ENCODE measurements at regions of chr1 and their contacts with region 1.

Region 1: DNA sequence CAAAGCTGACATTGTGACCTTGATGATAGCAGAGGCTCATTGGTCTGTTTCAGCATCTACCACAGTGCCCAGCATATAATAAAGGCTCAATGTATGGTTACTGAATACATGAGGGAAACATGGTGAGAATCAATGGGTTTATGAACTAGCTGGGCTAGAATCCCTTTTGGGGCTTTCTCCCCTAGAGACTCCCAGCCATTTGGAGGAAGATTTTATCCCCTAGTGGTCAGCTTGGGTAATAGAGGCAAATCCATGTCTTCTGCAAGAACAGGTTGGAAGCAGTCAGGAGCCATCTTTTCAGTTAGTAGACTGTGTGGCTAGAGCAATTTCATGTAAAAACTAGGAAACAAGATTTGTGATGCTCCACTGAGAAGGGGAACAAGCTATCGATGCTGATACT is 15.8 kb upstream of the REG4 start:
- DNase-seq: no peak
- H3K4me3 ChIP-seq: no peak overlapping the region
- H3K27me3 ChIP-seq: peaks cover 3% of the 10 kb centered on the region; the same call in 1 of the 2 replicates
- CTCF ChIP-seq: peak; percentile 20; the same call in 1 of the 2 replicates

Region 2: GRCh38 chr1:119816407-119816806 is 10.6 kb before region 1 on chr1:
- CTCF ChIA-PET with region 1: interaction called, 13 read pairs
- POLR2A ChIA-PET with region 1: no interaction called
- DNase-seq: no peak
- H3K4me3 ChIP-seq: no peak overlapping the region
- H3K27me3 ChIP-seq: no peaks in the 10 kb centered on the region
- CTCF ChIP-seq: no peak

Measured in BJ (cell line).